ENCODE measurements at regions of chr3 and their contacts with region 1.

Region 1: DNA sequence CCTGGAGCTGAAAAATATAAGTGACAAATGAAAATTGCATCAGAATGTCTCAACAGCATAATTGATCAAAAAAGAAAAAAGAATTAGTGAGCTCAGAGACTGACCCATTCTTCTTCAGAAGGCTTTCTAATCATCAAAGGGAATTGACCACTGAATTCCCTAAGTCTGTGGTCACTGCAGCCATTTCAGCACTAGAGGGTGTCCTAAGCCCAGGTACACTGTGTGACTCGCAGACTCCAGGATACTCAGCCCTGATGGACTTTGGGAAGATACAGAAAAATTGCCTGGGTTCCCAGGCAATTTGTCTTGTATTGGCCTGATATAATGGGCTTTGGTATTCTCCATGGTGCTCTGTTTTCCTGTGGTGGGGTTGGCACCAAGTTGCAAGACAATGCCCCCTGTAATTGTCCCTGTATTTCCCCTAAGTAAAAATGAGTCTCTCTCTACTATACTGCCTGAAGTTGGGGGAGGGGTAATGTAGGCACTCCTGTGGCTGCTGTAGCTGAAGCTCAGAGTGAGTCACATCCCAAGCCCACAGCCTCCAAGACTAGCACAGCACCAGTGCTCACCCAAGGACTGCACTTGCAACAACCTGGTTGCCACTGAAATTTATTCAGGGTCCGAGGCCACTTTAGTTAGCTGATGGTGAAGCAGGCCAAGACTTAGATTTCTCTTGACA is 256.0 kb upstream of the STAC start:
- DNase-seq: peak; percentile 51 to 64
- H3K4me3 ChIP-seq: no peak overlapping the region
- H3K4me3 Mint-ChIP-seq: no peak overlapping the region
- H3K27ac Mint-ChIP-seq: no peak overlapping the region
- H3K4me1 ChIP-seq: no peaks in the 10 kb centered on the region
- H3K4me1 Mint-ChIP-seq: no peaks in the 10 kb centered on the region
- H3K27me3 ChIP-seq: no peaks in the 10 kb centered on the region
- H3K27me3 Mint-ChIP-seq: peaks cover 2% of the 10 kb centered on the region
- CTCF ChIP-seq: peak; percentile 55 to 75

Region 2: DNA sequence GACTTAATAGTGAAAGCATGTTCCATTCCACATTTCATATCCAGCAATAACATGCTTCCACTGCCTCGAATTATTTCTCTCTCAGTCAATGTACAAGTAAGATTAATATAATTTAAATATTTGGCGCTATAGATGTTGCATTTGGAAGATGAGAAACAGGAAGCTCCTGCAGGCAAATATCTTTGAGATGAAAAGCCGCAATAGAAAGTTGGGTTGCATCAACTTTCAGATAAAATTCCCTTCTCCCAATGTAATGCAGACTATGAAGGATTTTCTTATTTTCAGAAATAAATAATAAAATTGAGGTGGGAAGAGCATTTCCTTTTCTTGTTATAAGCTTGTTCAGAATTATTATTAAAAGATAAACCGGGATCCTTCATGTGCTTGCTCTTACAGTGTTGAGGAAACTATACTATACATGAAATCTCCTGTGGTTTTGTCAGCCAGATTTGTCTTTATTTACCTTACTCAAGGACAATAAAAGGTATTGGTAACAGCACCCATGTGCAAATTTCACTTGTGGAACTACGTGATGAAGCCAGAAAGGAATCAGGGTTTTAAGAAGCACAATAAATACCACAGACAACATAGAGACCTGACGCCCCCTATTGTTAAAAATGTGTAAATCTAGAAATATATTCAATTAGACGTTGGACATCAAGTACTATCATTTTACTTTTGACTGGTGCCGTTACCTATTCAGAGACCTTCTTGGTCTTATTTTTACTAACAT is 178.0 kb before region 1 on chr3:
- CTCF ChIA-PET with region 1: no interaction called
- POLR2A ChIA-PET with region 1: no interaction called
- intact Hi-C with region 1: no loop called
- DNase-seq: no peak
- H3K4me3 ChIP-seq: no peak overlapping the region
- H3K4me3 Mint-ChIP-seq: no peak overlapping the region
- H3K27ac Mint-ChIP-seq: no peak overlapping the region
- H3K4me1 ChIP-seq: peaks cover 15% of the 10 kb centered on the region
- H3K4me1 Mint-ChIP-seq: peaks cover 12% of the 10 kb centered on the region
- H3K27me3 ChIP-seq: no peaks in the 10 kb centered on the region
- H3K27me3 Mint-ChIP-seq: no peaks in the 10 kb centered on the region
- CTCF ChIP-seq: peak in 1 of 2 experiments; percentile 25

Region 3: DNA sequence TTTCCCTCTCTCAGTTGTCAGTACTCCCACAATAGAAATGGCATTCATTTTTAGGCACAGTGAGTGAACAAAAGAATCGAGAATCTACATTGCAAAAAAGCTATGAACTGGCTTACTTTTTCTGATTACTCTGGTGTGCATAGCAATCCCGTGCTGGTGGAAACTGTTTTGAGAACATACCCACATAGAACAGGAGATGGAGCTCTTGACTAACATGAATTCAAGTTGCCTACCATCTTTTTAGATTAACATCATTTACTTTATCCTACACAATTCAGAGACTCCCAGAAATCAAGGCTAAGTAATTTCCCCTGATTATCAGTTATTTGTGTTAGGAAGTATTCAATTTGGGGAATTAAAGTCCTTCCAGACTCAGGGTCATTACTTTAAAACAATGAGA is 158.3 kb before region 1 on chr3:
- CTCF ChIA-PET with region 1: no interaction called
- POLR2A ChIA-PET with region 1: no interaction called
- intact Hi-C with region 1: loop called (anchors 2 kb)
- DNase-seq: peak in 1 of 2 experiments; percentile 13
- H3K4me3 ChIP-seq: no peak overlapping the region
- H3K4me3 Mint-ChIP-seq: no peak overlapping the region
- H3K27ac Mint-ChIP-seq: no peak overlapping the region
- H3K4me1 ChIP-seq: no peaks in the 10 kb centered on the region
- H3K4me1 Mint-ChIP-seq: no peaks in the 10 kb centered on the region
- H3K27me3 ChIP-seq: no peaks in the 10 kb centered on the region
- H3K27me3 Mint-ChIP-seq: peaks cover 2% of the 10 kb centered on the region
- CTCF ChIP-seq: peak; percentile 20 to 44

Region 4: DNA sequence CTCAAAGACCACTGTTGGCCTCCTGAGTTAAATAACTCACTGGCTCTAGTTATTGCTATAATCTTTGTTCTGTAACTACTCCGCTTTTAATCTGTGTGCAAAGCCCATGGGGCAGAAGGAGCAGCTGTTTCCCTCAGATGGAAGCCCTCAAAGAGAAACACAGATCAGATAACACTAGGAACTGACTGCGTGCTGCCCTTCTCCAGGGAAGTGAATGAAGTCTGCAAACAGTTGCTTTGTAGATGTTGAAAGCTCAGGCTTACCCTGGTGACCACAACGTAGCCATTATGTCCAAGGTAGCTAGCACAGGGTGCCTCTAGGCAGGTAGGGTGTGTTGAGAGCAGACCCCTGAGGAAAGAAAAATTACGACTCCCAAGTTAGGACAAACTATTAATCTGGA is 103.7 kb after region 1 on chr3:
- CTCF ChIA-PET with region 1: no interaction called
- POLR2A ChIA-PET with region 1: no interaction called
- intact Hi-C with region 1: no loop called
- DNase-seq: no peak
- H3K4me3 ChIP-seq: no peak overlapping the region
- H3K4me3 Mint-ChIP-seq: no peak overlapping the region
- H3K27ac Mint-ChIP-seq: no peak overlapping the region
- H3K4me1 ChIP-seq: no peaks in the 10 kb centered on the region
- H3K4me1 Mint-ChIP-seq: no peaks in the 10 kb centered on the region
- H3K27me3 ChIP-seq: no peaks in the 10 kb centered on the region
- H3K27me3 Mint-ChIP-seq: peaks cover 11% of the 10 kb centered on the region
- CTCF ChIP-seq: no peak

Region 5: GRCh38 chr3:36408146-36408545 is 283.9 kb after region 1 on chr3:
- CTCF ChIA-PET with region 1: no interaction called
- POLR2A ChIA-PET with region 1: no interaction called
- intact Hi-C with region 1: loop called (anchors 5 kb)
- DNase-seq: peak in 1 of 2 experiments; percentile 3
- H3K4me3 ChIP-seq: no peak overlapping the region
- H3K4me3 Mint-ChIP-seq: no peak overlapping the region
- H3K27ac Mint-ChIP-seq: no peak overlapping the region
- H3K4me1 ChIP-seq: no peaks in the 10 kb centered on the region
- H3K4me1 Mint-ChIP-seq: no peaks in the 10 kb centered on the region
- H3K27me3 ChIP-seq: no peaks in the 10 kb centered on the region
- H3K27me3 Mint-ChIP-seq: peaks cover 15% of the 10 kb centered on the region
- CTCF ChIP-seq: peak in 1 of 2 experiments; percentile 17

Region 6: DNA sequence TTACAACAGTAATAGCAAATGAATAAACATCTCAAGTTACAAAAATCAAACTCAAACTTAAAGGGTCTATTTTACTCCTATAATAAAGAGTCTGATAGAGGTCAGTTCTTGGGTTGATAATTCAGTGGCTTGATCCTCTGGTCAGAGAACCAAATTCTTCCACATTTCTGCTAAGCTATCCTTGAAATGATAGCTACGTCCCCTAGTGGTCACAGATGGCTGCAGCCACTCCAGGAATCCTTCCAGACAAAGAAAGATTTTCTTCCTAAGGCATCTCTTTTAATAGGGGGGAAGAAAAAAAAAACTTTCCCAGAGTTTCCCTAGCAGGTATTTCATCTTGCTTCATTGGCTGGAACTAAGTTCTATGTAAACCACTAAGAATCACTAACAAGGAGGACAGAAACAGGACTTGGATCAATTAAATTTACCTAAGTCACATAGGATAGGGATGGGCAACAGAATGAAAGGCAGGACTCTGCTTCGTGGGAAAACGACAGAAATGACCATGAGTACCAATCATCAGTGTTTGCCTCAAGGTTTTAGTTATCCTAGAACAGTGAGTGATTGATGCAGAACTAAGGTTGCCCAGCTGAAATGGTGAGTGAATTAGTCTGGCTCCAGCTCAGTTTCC is 416.7 kb after region 1 on chr3:
- CTCF ChIA-PET with region 1: no interaction called
- POLR2A ChIA-PET with region 1: no interaction called
- intact Hi-C with region 1: loop called (anchors 1 kb)
- DNase-seq: peak in 1 of 2 experiments; percentile 20
- H3K4me3 ChIP-seq: no peak overlapping the region
- H3K4me3 Mint-ChIP-seq: no peak overlapping the region
- H3K27ac Mint-ChIP-seq: no peak overlapping the region
- H3K4me1 ChIP-seq: no peaks in the 10 kb centered on the region
- H3K4me1 Mint-ChIP-seq: no peaks in the 10 kb centered on the region
- H3K27me3 ChIP-seq: no peaks in the 10 kb centered on the region; the same call in 1 of the 2 replicates
- H3K27me3 Mint-ChIP-seq: peaks cover 14% of the 10 kb centered on the region
- CTCF ChIP-seq: peak; percentile 56 to 85

Region 7: GRCh38 chr3:36606871-36607765 is 482.9 kb after region 1 on chr3:
- CTCF ChIA-PET with region 1: no interaction called
- POLR2A ChIA-PET with region 1: no interaction called
- intact Hi-C with region 1: loop called (anchors 5 kb)
- DNase-seq: peak; percentile 39 to 45
- H3K4me3 ChIP-seq: no peak overlapping the region
- H3K4me3 Mint-ChIP-seq: no peak overlapping the region
- H3K27ac Mint-ChIP-seq: no peak overlapping the region
- H3K4me1 ChIP-seq: peaks cover 7% of the 10 kb centered on the region; the same call in 1 of the 2 replicates
- H3K4me1 Mint-ChIP-seq: peaks cover 20% of the 10 kb centered on the region
- H3K27me3 ChIP-seq: no peaks in the 10 kb centered on the region
- H3K27me3 Mint-ChIP-seq: peaks cover 23% of the 10 kb centered on the region
- CTCF ChIP-seq: no peak

Region 8: DNA sequence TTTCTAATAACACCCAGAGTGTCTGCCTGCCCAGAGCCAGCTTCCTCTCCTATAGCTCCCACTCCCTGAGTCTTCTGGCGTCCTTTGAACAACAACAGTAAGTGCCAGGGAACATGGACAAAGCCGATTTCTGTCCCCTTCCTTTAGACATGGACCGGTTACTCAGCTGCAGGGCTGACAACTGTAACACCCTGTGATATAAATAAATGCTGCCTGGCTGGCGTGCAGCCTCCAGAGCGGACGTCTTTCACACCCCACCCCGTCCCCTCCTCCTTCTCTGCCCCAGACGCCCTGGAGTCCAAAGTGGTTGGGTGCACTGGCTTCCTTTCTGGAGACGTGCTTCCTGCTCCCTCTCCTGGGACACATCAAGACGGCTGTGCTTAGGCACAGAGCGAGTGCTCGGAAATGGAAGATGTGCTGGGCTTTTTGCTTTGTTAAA is 1332.0 kb after region 1 on chr3:
- CTCF ChIA-PET with region 1: no interaction called
- POLR2A ChIA-PET with region 1: no interaction called
- intact Hi-C with region 1: no loop called
- DNase-seq: no peak
- H3K4me3 ChIP-seq: no peak overlapping the region
- H3K4me3 Mint-ChIP-seq: no peak overlapping the region
- H3K27ac Mint-ChIP-seq: no peak overlapping the region
- H3K4me1 ChIP-seq: 0 out of 2 replicates have a peak, but pooled peaks cover 12% of the 10 kb centered on the region
- H3K4me1 Mint-ChIP-seq: peaks cover 12% of the 10 kb centered on the region
- H3K27me3 ChIP-seq: no peaks in the 10 kb centered on the region
- H3K27me3 Mint-ChIP-seq: no peaks in the 10 kb centered on the region
- CTCF ChIP-seq: no peak